AG04449 (cell line): ENCODE measurements at regions of chr7 and their contacts with region 1.

Region 1: DNA sequence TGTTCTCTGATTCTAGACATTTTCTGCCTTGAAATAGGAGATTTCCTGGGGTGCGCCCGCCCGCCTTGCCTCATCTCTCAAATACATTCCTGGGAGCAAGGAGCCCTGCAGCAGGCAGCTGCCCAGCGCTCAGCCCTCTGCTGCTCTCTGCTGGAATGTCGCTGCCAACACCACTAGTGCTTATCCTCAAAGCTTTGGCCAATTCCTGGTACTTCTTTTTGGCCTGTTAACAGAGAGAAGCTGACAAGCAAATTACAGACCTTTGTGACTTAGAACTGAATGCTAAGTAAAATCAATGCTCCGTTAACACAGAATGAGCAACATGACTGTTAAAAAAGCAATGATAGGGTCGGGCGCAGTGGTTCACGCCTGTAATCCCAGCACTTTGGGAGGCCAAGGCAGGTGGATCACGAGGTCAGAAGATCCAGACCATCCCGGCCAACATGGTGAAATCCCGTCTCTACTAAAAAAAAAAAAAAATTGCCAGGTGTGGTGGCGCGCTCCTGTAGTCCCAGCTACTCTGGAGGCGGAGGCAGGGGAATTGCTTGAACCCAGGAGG is 41.9 kb upstream of the SYPL1 start:
- DNase-seq: no peak
- H3K4me3 ChIP-seq: no peak overlapping the region
- CTCF ChIP-seq: peak; percentile 92

Region 2: GRCh38 chr7:105975770-105976422 is 178.1 kb before region 1 on chr7:
- CTCF ChIA-PET with region 1: no interaction called
- POLR2A ChIA-PET with region 1: no interaction called
- DNase-seq: peak; percentile 69
- H3K4me3 ChIP-seq: no peak overlapping the region
- CTCF ChIP-seq: no peak

Region 3: GRCh38 chr7:106050011-106050745 is 103.8 kb before region 1 on chr7:
- CTCF ChIA-PET with region 1: interaction called, 400 read pairs
- POLR2A ChIA-PET with region 1: interaction called, 3 read pairs
- DNase-seq: no peak
- H3K4me3 ChIP-seq: no peak overlapping the region
- CTCF ChIP-seq: peak; percentile 45

Region 4: GRCh38 chr7:106064771-106065585 is 89.0 kb before region 1 on chr7:
- CTCF ChIA-PET with region 1: interaction called, 31 read pairs
- POLR2A ChIA-PET with region 1: no interaction called
- DNase-seq: peak; percentile 82
- H3K4me3 ChIP-seq: peak overlapping the region; percentile 32
- CTCF ChIP-seq: peak; percentile 22

Region 5: GRCh38 chr7:106126170-106126938 is 27.6 kb before region 1 on chr7:
- CTCF ChIA-PET with region 1: interaction called, 11 read pairs
- POLR2A ChIA-PET with region 1: no interaction called
- DNase-seq: no peak
- H3K4me3 ChIP-seq: no peak overlapping the region
- CTCF ChIP-seq: no peak

Region 6: DNA sequence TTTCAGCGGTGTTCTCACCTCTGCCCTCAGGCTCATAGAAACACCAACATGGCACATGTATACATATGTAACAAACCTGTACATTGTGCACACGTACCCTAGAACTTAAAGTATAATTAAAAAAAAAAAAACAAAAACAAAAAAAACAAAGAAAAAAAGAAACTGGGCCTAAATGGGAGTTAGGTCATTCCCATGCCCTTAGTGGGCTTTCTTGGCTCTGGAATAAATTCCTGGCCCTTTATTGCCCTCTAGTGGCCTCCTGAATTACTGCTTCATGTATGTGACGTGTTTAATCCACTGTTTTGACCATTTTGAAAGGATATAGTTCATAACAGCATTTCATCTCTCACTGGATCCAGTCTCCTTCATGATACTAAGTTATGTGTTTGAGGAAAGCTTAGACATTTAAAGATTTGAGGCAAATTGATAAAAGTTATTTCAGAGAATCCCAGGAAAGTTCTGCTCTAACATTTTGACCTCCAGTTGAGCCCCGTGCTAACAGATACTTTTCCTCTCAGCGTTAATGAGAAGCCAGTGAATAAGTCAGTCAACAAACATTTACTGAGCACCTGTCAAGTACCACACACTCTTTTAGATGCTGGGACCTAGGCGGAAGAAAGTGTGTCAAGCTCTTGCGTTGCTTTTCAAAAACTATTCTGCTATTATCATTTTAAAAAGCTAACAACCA is 12.8 kb after region 1 on chr7:
- CTCF ChIA-PET with region 1: interaction called, 105 read pairs
- POLR2A ChIA-PET with region 1: no interaction called
- DNase-seq: no peak
- H3K4me3 ChIP-seq: no peak overlapping the region
- CTCF ChIP-seq: peak; percentile 68

Region 7: GRCh38 chr7:106392590-106392989 is 238.6 kb after region 1 on chr7:
- CTCF ChIA-PET with region 1: no interaction called
- POLR2A ChIA-PET with region 1: no interaction called
- DNase-seq: no peak
- H3K4me3 ChIP-seq: no peak overlapping the region
- CTCF ChIP-seq: no peak